Naive thymus-derived CD4-positive, alpha-beta T cell (primary cell): ENCODE measurements at regions of chr13 and their contacts with region 1.

Region 1: DNA sequence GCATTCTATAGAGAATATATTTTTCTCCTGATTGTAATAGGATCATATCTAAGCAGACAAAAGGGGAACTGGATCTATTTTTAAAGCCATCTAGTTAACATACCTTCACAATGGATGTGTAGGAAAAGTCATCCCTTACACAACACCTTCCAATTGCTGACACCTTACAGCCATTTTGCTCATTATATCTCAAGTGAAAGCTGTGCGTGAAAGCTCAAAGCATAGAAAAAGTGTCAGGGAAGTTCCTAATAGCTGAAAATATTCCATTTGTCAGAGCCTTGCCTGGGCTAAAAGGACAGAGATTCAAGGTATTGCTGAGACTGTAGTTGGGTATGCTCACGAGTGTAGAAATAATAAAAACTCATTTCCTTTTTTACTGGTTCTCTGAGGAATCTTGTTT is 340.6 kb upstream of the KLHL1 start:
- DNase-seq: no peak
- ATAC-seq: no peak
- H3K4me3 ChIP-seq: no peak overlapping the region
- H3K4me3 Mint-ChIP-seq: no peak overlapping the region
- H3K27ac ChIP-seq: no peak overlapping the region
- H3K27ac Mint-ChIP-seq: no peak overlapping the region
- H3K4me1 ChIP-seq: no peaks in the 10 kb centered on the region
- H3K4me1 Mint-ChIP-seq: no peaks in the 10 kb centered on the region
- H3K27me3 ChIP-seq: no peaks in the 10 kb centered on the region
- H3K27me3 Mint-ChIP-seq: no peaks in the 10 kb centered on the region

Region 2: GRCh38 chr13:70579941-70580340 is 131.1 kb after region 1 on chr13:
- CTCF ChIA-PET with region 1: no interaction called
- POLR2A ChIA-PET with region 1: no interaction called
- intact Hi-C with region 1: loop called in 1 of 2 experiments (anchors 1 kb)
- DNase-seq: no peak
- ATAC-seq: no peak
- H3K4me3 ChIP-seq: no peak overlapping the region
- H3K4me3 Mint-ChIP-seq: no peak overlapping the region
- H3K27ac ChIP-seq: no peak overlapping the region
- H3K27ac Mint-ChIP-seq: no peak overlapping the region
- H3K4me1 ChIP-seq: no peaks in the 10 kb centered on the region
- H3K4me1 Mint-ChIP-seq: no peaks in the 10 kb centered on the region
- H3K27me3 ChIP-seq: no peaks in the 10 kb centered on the region
- H3K27me3 Mint-ChIP-seq: no peaks in the 10 kb centered on the region